Activated CD4-positive, alpha-beta T cell treated with anti-CD3 and anti-CD28 coated beads for 36 hours (primary cell): ENCODE measurements at regions of chr9 and their contacts with region 1.

Region 1: GRCh38 chr9:126804696-126805545 is at the start of gene ZBTB43:
- DNase-seq: peak; percentile 99
- ATAC-seq: peak; percentile 85
- H3K4me3 Mint-ChIP-seq: peak within 1 kb of the TSS; percentile 96
- H3K27ac Mint-ChIP-seq: peak within 1 kb of the TSS; percentile 100
- H3K4me1 Mint-ChIP-seq: peaks cover 36% of the 10 kb centered on the region
- H3K27me3 Mint-ChIP-seq: no peaks in the 10 kb centered on the region
- total RNA-seq, gene ZBTB43: 19.3 to 23.0 TPM

Region 2: GRCh38 chr9:126636983-126637798 is 167.7 kb before region 1 on chr9:
- CTCF ChIA-PET with region 1: no interaction called
- POLR2A ChIA-PET with region 1: no interaction called
- intact Hi-C with region 1: no loop called
- DNase-seq: no peak
- ATAC-seq: no peak
- H3K4me3 Mint-ChIP-seq: no peak overlapping the region
- H3K27ac Mint-ChIP-seq: no peak overlapping the region
- H3K4me1 Mint-ChIP-seq: peaks cover 2% of the 10 kb centered on the region
- H3K27me3 Mint-ChIP-seq: peaks cover 53% of the 10 kb centered on the region

Region 3: GRCh38 chr9:126722252-126723078 is 82.5 kb before region 1 on chr9:
- CTCF ChIA-PET with region 1: interaction called, 3 read pairs
- POLR2A ChIA-PET with region 1: no interaction called
- intact Hi-C with region 1: loop called in 1 of 2 experiments (anchors 1 kb)
- DNase-seq: peak; percentile 96
- ATAC-seq: peak; percentile 73
- H3K4me3 Mint-ChIP-seq: peak overlapping the region; percentile 77
- H3K27ac Mint-ChIP-seq: peak overlapping the region; percentile 89
- H3K4me1 Mint-ChIP-seq: peaks cover 43% of the 10 kb centered on the region
- H3K27me3 Mint-ChIP-seq: no peaks in the 10 kb centered on the region

Region 4: DNA sequence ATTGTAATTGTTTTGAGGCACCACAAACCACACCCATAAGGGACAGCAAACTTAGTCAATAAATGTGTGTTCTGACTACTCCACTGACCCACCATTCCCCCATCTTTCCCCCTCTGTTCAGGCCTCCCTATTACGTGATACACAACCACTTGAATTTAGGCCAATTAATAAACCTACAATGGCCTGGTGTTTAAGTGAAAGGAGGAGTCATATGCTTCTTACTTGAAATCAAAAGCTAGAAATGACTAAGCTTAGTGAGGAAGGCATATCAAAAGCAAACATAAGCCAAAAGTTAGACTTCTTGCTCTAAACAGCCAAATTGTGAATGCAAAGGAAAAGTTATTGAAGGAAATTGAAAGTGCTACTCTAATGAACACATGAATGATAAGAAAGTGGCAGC is 14.6 kb after region 1 on chr9:
- CTCF ChIA-PET with region 1: interaction called, 3 read pairs
- POLR2A ChIA-PET with region 1: interaction called, 5 read pairs
- intact Hi-C with region 1: loop called in 1 of 2 experiments (anchors 1 kb)
- DNase-seq: no peak
- ATAC-seq: peak; percentile 96
- H3K4me3 Mint-ChIP-seq: no peak overlapping the region
- H3K27ac Mint-ChIP-seq: peak overlapping the region; percentile 86
- H3K4me1 Mint-ChIP-seq: peaks cover 29% of the 10 kb centered on the region
- H3K27me3 Mint-ChIP-seq: no peaks in the 10 kb centered on the region

Region 5: DNA sequence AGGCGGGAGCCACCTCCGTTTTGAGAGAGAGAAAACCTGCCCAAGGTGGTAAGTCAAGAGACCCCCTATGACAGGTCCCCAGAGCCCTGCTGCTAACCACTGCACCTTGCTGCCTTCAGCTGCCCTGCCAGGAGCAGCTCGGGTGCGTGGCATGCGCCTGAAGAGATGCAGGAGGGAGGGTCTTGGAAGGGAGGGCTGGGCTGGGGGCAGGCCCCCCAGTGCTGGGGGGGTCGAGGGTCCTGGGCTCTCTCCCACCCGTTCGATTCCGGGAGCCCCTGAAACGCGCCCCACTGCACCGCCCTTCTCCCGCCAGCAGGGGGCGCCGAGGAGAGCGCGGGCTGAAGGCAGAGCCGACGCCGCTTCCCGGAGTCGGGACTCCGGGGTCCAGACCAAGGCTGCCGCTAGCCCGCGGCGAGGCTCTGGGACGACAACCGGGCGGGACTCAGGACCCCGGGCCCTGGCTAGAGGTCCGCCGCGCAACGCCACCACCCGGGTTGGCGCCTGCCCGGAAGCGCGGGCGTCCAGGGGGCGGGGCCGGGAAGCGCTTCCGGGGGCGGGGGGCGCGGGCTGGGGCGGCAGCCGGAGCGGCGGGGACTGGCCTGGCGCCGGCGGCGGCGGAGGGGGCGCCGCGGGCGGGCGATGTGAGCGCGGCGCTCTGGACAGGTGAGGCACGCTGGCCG is 55.3 kb after region 1 on chr9 and contains the start of gene ZBTB34:
- CTCF ChIA-PET with region 1: interaction called, 3 read pairs
- POLR2A ChIA-PET with region 1: no interaction called
- intact Hi-C with region 1: loop called (anchors 1 to 2 kb)
- DNase-seq: peak; percentile 84
- ATAC-seq: peak; percentile 83
- H3K4me3 Mint-ChIP-seq: peak within 1 kb of the TSS; percentile 74
- H3K27ac Mint-ChIP-seq: peak within 1 kb of the TSS; percentile 81
- H3K4me1 Mint-ChIP-seq: peaks cover 19% of the 10 kb centered on the region
- H3K27me3 Mint-ChIP-seq: no peaks in the 10 kb centered on the region
- total RNA-seq, gene ZBTB34: 4.2 to 5.0 TPM

Region 6: GRCh38 chr9:127489471-127490115 is 684.7 kb after region 1 on chr9:
- CTCF ChIA-PET with region 1: no interaction called
- POLR2A ChIA-PET with region 1: no interaction called
- intact Hi-C with region 1: no loop called
- DNase-seq: no peak
- ATAC-seq: no peak
- H3K4me3 Mint-ChIP-seq: no peak overlapping the region
- H3K27ac Mint-ChIP-seq: no peak overlapping the region
- H3K4me1 Mint-ChIP-seq: no peaks in the 10 kb centered on the region
- H3K27me3 Mint-ChIP-seq: no peaks in the 10 kb centered on the region